Activated T-helper 1 cell treated with anti-CD3 and anti-CD28 coated beads, Interleukin-12 subunit alpha, Interleukin-12 subunit beta, Interleukin-2, Interleukin-4 antibody, amounts not matched to agents 30 ng/mL and 10 ng/mL and 1 ng/mL, durations not matched to agents 14 hours and 24 hours and 36 hours (primary cell): ENCODE measurements at regions of chr9 and their contacts with region 1.

Region 1: DNA sequence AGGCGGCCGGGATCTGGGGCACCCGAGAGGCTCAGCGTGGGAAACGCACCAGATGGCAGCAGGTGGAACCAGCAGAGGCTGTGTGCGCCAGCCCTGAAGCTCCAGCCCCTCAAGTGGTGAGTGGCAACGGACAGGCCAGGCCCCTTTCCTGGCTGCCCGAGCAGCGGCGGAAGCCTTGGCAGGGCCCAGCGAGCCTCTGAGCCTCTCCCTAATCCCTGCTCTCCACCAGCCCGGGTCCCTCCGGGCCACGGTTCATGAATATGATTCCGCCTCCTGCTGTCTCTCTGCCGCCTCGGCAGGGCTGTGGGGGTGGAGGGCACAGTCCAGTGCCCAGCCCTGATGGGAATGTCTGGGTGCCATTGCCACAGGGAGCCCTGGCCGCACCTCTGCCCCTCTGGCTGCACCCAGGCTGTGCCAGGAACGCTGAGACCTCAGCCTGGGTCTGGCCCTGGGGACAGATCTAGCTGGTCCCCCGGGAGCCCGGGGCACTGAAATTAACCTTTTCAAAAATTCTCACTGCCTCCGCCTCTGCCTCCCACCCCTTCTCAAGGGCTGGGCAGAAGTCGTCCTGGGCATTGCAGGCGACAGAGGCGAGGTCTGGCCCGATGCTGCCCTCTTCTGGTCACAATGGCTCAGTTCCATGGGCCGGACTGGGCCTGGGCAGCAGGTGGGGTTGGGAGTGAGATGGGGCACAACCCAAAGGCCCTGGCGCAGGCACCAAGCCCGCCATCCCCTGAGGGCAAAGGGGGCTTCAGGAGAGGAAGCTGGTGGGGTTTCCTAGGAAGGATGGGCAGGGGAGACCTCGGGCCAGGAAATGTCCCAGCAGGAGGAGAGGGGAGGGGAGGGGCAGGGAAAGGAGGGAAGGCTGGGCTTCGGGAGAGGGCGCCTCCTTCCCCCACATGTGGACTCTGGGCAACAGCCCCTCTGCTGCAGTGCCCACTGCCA is 20.3 kb downstream of the CCDC187 start:
- DNase-seq: peak; percentile 54
- H3K4me3 Mint-ChIP-seq: no peak overlapping the region
- H3K27ac Mint-ChIP-seq: no peak overlapping the region
- H3K4me1 Mint-ChIP-seq: no peaks in the 10 kb centered on the region
- H3K27me3 Mint-ChIP-seq: no peaks in the 10 kb centered on the region

Region 2: DNA sequence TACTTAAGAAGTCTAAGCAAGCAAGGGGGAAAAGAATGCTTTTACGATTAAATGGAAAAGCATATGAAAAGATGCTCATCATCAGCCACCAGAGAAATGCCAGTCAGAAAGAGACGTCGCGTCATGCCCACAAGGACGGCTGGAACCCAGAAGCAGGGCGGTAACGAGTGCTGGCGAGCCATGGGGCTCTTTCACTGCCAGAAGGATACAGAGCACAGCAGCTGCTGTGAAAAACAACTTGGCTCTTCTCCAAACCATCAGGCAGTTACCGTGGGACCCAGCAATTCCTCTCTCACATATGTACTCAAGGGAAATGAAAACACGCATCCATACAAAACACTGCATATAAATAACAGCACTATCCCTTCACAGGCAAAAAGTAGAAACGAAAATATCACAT is 471.8 kb before region 1 on chr9:
- intact Hi-C with region 1: no loop called
- DNase-seq: no peak
- H3K4me3 Mint-ChIP-seq: no peak overlapping the region
- H3K27ac Mint-ChIP-seq: no peak overlapping the region
- H3K4me1 Mint-ChIP-seq: no peaks in the 10 kb centered on the region
- H3K27me3 Mint-ChIP-seq: no peaks in the 10 kb centered on the region

Region 3: DNA sequence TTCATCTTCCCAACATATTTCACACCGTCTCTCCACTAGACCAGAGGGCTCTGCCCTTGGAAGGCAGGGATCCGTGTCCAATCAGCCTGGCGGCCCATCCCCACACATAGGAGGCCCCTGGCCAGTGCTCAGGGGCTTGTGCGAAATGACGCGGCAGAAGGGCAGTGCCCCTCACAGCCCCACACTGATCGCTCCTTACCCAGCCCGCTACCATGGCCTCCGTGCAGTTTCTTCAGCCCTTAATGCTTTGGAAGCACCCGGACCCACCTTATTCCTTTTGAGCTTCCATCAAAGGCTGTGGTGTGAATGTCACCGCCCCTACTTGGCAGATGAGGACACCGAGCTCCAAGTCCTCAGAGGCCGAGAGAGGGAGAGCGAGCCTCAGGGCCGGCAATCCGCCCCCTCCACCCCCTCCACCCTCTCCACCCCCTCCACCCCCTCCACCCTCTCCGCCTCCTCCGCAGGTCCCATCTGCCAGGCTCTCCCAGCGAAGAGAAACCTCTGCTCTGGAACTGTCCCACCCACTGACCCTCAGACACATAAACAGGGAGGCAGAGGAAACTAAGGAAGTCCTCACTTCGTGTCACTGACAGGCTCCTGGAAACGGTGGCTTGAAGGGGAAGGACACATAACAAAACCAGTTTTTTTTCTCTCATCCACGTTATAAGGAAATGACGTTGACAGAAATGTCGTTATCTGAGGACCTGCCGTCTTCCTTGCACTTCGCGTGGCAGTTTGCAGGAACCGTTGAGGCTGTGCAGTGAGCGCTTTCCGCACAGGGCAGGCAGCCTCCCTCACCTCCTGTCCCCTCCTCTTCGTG is 51.9 kb before region 1 on chr9:
- intact Hi-C with region 1: loop called (anchors 1 kb)
- DNase-seq: peak; percentile 35
- H3K4me3 Mint-ChIP-seq: peak overlapping the region; percentile 68
- H3K27ac Mint-ChIP-seq: peak overlapping the region; percentile 92
- H3K4me1 Mint-ChIP-seq: peaks cover 50% of the 10 kb centered on the region
- H3K27me3 Mint-ChIP-seq: no peaks in the 10 kb centered on the region